PC-9 (cell line): ENCODE measurements at regions of chr11 and their contacts with region 1.

Region 1: DNA sequence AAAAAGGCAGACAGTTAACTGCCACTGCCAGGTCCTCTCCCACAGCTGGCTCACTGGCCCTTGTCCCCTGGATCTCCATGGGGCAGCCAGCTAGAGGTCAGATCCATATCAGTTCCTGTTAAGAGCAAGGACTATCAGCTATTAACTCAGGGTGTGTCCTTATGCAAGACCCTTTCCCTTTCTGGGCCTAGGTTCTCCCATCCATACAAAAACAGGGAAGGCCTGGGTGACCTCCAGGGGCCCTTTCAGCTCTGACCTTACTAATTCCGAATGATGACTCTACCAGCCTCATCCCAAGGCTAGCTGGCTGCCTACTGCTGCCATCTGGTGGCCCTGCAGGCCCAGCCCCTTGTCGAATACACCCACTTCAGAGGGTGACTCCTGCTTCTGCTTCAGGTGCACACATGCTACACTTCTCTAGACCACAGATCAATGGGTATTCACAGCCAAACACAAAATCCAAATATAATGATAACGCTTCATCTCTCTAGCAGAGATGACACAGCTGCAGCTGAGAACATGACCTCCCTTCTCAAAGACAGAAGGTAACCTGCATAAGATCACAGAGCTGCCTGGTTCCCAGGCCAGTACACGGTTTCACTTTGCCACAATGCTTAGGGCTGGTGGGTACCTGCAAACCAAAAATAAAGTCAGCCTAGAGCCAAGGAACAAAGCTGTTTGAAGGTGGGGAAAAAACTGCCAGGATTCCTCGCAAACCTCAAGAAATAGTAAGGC is 34.1 kb downstream of the SERGEF start:
- DNase-seq: peak; percentile 48 to 58
- H3K4me3 ChIP-seq: no peak overlapping the region
- H3K27ac ChIP-seq: no peak overlapping the region
- H3K4me1 ChIP-seq: no peaks in the 10 kb centered on the region
- H3K27me3 ChIP-seq: no peaks in the 10 kb centered on the region
- CTCF ChIP-seq: peak; percentile 82

Region 2: DNA sequence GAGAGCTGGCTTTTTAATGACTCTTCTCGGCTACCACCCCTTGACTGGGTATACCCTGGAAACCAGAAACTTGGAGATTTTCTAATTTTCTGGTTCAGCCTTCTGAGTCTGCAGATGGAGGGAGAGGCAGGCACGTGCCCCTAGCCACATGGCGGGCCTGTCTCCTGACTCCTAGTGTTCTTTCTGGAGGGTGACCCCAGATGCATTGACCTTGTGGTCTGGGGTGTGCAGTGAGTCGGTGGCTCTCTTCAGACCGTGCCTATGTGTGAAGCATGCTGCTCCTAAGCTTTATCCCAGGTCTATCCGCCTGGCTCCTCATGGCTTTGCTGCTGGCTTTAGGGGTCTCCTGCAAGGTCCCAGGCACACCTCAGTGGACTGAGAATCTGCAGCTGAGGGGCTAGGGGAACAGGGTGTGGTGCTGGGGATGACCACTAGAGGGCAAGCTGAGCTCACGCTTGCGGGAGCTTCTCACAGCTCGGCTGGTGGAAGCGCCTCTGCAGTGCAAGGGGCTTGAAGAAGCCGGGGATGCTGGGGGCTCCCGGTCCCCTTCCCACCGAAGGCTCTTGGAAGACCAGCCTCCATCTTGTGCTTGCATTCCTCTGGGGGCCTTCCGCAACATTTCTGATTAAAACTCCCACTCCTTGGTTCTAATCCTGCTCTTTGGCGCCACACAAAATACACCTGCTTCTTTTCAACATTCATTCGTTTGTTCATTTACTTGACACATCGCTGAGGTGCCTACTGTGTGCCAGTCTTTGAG is 379.8 kb before region 1 on chr11:
- CTCF ChIA-PET with region 1: no interaction called
- POLR2A ChIA-PET with region 1: no interaction called
- intact Hi-C with region 1: loop called (anchors 1 kb)
- DNase-seq: peak in 1 of 2 experiments; percentile 60
- H3K4me3 ChIP-seq: no peak overlapping the region
- H3K27ac ChIP-seq: no peak overlapping the region
- H3K4me1 ChIP-seq: no peaks in the 10 kb centered on the region
- H3K27me3 ChIP-seq: peaks cover 40% of the 10 kb centered on the region
- CTCF ChIP-seq: peak; percentile 96

Region 3: GRCh38 chr11:17760102-17761029 is 218.4 kb before region 1 on chr11:
- CTCF ChIA-PET with region 1: interaction called, 10 read pairs
- POLR2A ChIA-PET with region 1: no interaction called
- intact Hi-C with region 1: loop called (anchors 1 kb)
- DNase-seq: peak; percentile 41 to 57
- H3K4me3 ChIP-seq: no peak overlapping the region
- H3K27ac ChIP-seq: no peak overlapping the region
- H3K4me1 ChIP-seq: no peaks in the 10 kb centered on the region
- H3K27me3 ChIP-seq: peaks cover 21% of the 10 kb centered on the region
- CTCF ChIP-seq: peak; percentile 69

Region 4: DNA sequence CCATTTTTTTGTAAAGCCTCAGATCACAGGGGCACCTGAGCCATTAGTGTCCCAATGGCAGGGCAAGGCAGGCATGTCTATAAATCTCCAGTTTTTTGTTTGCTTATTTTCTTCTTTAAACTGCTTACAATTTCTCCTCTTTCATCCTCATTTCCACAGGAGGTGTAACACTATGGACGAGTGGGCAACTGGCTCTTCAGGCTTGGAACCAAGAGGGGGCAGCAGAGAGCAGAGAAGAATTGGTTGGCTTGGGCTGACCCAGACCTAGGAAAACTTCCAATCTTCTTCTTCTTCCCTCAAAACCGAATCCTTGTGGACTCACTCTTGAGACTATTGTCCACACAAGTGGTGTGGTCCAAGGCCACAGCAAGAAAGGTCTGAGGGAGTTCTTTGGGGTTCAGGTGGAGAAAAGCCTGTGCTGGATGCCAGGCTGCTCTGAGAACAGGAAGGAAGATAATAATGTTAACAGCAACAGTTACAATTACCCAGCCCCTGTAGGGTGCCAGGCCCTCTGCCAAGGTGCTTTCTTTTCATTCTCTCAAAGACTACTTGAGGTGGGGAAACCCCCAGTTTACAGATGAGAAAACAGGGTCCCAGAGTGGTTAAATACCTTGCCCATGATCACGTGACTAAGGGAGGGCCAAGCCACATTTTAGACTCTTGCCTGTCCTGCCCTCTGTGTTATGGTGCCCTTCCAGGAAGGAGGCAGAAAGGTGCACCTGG is 1332.7 kb after region 1 on chr11:
- CTCF ChIA-PET with region 1: no interaction called
- POLR2A ChIA-PET with region 1: no interaction called
- intact Hi-C with region 1: loop called (anchors 10 kb)
- DNase-seq: peak in 1 of 2 experiments; percentile 63
- H3K4me3 ChIP-seq: no peak overlapping the region
- H3K27ac ChIP-seq: no peak overlapping the region
- H3K4me1 ChIP-seq: no peaks in the 10 kb centered on the region; the same call in 1 of the 2 replicates
- H3K27me3 ChIP-seq: no peaks in the 10 kb centered on the region
- CTCF ChIP-seq: peak; percentile 94